ENCODE measurements at regions of chr13 and their contacts with region 1.

Region 1: GRCh38 chr13:48580185-48580803 is 47.4 kb upstream of the RCBTB2 start:
- DNase-seq: no peak
- ATAC-seq: peak; percentile 47
- H3K4me3 Mint-ChIP-seq: no peak overlapping the region
- H3K27ac Mint-ChIP-seq: no peak overlapping the region
- H3K4me1 Mint-ChIP-seq: peaks cover 21% of the 10 kb centered on the region
- H3K27me3 Mint-ChIP-seq: peaks cover 51% of the 10 kb centered on the region
- CTCF ChIP-seq: peak; percentile 38

Region 2: DNA sequence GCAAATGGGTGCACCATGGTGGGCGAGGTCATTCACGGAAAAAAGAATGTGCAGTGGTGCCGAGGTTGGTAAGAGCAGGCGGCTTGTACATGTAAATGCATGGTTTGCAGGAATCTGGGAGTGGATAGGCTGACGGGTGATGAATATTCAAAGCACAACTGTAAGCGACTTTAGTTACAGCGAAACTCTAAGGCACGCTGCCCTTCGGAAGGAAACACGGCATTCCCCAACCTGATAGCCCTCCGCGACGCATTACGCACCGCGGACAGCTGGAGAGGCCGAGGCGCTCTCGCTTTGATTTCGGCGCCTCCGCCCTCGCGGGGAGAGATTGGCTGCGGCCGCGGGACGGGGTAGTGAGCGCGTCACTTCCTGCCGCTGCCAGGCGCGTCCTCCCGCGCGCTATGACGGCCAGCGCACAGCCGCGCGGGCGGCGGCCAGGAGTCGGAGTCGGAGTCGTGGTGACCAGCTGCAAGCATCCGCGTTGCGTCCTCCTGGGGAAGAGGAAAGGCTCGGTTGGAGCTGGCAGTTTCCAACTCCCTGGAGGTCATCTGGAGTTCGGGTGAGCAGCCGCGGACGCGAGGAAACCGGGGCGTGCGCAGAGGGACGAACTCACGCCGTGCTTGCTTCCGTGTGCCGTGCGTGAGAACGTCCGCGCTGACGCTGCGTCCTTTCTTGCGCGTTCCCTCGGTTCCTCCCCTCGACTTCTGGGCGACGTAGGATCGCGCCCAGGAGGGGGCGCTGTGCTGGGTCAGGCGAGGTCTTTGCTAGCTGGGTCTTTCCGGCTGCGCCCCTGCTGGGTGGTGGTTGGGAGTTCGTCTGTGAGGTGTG is 542.7 kb before region 1 on chr13 and contains the start of gene NUDT15:
- CTCF ChIA-PET with region 1: interaction called, 8 read pairs
- POLR2A ChIA-PET with region 1: interaction called, 8 read pairs
- intact Hi-C with region 1: loop called (anchors 2 kb)
- DNase-seq: peak; percentile 92
- ATAC-seq: peak; percentile 94
- H3K4me3 Mint-ChIP-seq: peak within 1 kb of the TSS; percentile 93
- H3K27ac Mint-ChIP-seq: peak within 1 kb of the TSS; percentile 96
- H3K4me1 Mint-ChIP-seq: peaks cover 29% of the 10 kb centered on the region
- H3K27me3 Mint-ChIP-seq: no peaks in the 10 kb centered on the region
- CTCF ChIP-seq: peak; percentile 83
- total RNA-seq, gene NUDT15: 5.5 and 6.2 TPM in 2 replicates

Region 3: DNA sequence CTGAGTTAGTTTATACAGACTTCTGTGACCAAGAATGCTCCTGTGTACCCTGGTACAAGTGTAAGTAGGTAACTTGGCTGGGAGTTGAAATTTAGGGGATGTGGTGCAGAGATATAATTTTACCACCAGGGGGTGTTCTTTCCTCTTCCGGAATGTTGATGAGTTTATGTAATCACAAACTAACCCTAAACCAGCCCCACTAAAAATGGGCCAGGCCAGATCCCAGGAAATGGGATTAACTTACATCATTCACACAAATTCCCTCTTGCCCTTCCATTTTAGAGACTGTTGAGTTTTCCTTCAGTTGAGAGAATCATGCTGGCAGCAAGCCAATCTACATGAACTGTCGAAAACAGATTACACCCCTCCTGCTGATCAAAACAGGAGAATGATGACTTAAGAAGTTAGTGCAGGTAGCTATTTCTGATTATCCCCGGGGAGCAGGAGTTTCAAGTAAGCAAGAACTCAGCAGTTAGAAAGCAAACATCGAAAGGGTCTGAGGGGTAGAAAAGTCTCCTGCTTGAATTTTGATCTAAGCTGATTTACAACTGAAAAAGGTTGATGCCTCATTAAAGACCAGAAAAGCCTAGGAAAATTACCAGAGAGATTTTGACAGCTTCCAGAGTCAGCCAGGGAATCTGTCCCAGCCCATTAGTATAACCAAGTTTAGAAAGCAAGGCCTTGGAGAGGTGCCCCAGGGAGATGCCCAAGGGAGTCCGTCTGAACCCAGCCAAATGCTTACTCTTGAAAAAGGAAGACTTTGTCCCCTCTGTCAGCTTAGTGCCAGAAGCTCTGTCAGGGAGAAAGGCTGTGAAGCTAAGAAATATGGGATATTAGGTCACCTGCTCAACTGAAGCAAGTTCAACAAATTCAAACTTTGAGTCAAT is 453.1 kb before region 1 on chr13:
- CTCF ChIA-PET with region 1: interaction called, 39 read pairs
- POLR2A ChIA-PET with region 1: no interaction called
- intact Hi-C with region 1: loop called (anchors 1 kb)
- DNase-seq: no peak
- ATAC-seq: peak; percentile 90
- H3K4me3 Mint-ChIP-seq: no peak overlapping the region
- H3K27ac Mint-ChIP-seq: peak overlapping the region; percentile 9
- H3K4me1 Mint-ChIP-seq: peaks cover 7% of the 10 kb centered on the region
- H3K27me3 Mint-ChIP-seq: no peaks in the 10 kb centered on the region
- CTCF ChIP-seq: peak; percentile 74

Region 4: GRCh38 chr13:48318821-48319511 is 261.3 kb before region 1 on chr13:
- CTCF ChIA-PET with region 1: interaction called, 4 read pairs
- POLR2A ChIA-PET with region 1: interaction called, 3 read pairs
- intact Hi-C with region 1: loop called (anchors 1 kb)
- DNase-seq: no peak
- ATAC-seq: peak; percentile 29
- H3K4me3 Mint-ChIP-seq: peak overlapping the region; percentile 81
- H3K27ac Mint-ChIP-seq: no peak overlapping the region
- H3K4me1 Mint-ChIP-seq: peaks cover 48% of the 10 kb centered on the region
- H3K27me3 Mint-ChIP-seq: no peaks in the 10 kb centered on the region
- CTCF ChIP-seq: no peak

Region 5: GRCh38 chr13:48492470-48493065 is 87.7 kb before region 1 on chr13:
- CTCF ChIA-PET with region 1: interaction called, 9 read pairs
- POLR2A ChIA-PET with region 1: interaction called, 8 read pairs
- intact Hi-C with region 1: loop called (anchors 1 kb)
- DNase-seq: peak; percentile 60
- ATAC-seq: peak; percentile 89
- H3K4me3 Mint-ChIP-seq: no peak overlapping the region
- H3K27ac Mint-ChIP-seq: no peak overlapping the region
- H3K4me1 Mint-ChIP-seq: peaks cover 34% of the 10 kb centered on the region
- H3K27me3 Mint-ChIP-seq: no peaks in the 10 kb centered on the region
- CTCF ChIP-seq: no peak

Region 6: GRCh38 chr13:48562296-48563066 is 17.8 kb before region 1 on chr13:
- CTCF ChIA-PET with region 1: interaction called, 17 read pairs
- POLR2A ChIA-PET with region 1: interaction called, 7 read pairs
- intact Hi-C with region 1: loop called (anchors 1 kb)
- DNase-seq: no peak
- ATAC-seq: peak; percentile 99
- H3K4me3 Mint-ChIP-seq: no peak overlapping the region
- H3K27ac Mint-ChIP-seq: peak overlapping the region; percentile 57
- H3K4me1 Mint-ChIP-seq: peaks cover 24% of the 10 kb centered on the region
- H3K27me3 Mint-ChIP-seq: peaks cover 59% of the 10 kb centered on the region
- CTCF ChIP-seq: no peak